ENCODE measurements at regions of chr7 and their contacts with region 1.

Region 1: DNA sequence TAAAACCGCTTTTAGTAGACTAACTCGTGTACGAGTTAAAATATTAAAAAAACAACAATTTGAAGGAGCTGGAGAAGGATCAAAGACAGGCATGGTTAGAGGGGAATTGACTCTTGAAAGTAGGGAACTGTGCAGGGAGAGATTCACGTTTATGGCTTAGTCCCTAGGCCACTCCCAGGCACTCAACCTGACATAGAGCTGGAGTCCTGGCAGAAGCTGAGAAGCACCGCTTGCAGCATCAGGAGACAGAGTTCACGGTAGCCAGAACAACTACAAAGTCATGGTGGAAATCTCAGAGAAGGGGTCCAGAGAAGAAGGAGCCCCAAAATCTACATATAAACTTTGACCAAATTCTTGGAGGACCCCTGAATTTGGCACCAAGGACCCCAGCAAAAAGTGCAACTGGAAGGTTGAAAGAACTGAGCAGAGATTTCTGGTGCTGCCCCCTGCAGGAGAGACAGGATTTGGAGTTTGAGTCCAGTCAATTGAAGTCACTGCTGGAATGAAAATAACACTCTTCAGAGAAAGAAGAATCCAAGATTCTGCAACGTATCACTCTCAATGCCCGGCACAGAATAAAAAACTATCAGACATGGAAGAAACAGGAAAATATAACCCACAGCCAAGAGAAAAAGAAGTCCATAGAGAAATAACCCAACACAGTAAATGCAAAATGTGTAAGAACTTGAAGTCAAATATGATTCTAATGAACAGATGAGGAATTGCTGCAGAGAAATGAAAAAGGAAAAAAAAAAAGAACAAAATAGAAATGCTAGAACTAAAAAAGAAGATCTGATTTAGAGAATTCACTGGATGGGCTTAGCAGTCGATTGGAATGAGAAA is 493.3 kb upstream of the PODXL start:
- DNase-seq: peak in 1 of 10 donors; percentile 26

Region 2: DNA sequence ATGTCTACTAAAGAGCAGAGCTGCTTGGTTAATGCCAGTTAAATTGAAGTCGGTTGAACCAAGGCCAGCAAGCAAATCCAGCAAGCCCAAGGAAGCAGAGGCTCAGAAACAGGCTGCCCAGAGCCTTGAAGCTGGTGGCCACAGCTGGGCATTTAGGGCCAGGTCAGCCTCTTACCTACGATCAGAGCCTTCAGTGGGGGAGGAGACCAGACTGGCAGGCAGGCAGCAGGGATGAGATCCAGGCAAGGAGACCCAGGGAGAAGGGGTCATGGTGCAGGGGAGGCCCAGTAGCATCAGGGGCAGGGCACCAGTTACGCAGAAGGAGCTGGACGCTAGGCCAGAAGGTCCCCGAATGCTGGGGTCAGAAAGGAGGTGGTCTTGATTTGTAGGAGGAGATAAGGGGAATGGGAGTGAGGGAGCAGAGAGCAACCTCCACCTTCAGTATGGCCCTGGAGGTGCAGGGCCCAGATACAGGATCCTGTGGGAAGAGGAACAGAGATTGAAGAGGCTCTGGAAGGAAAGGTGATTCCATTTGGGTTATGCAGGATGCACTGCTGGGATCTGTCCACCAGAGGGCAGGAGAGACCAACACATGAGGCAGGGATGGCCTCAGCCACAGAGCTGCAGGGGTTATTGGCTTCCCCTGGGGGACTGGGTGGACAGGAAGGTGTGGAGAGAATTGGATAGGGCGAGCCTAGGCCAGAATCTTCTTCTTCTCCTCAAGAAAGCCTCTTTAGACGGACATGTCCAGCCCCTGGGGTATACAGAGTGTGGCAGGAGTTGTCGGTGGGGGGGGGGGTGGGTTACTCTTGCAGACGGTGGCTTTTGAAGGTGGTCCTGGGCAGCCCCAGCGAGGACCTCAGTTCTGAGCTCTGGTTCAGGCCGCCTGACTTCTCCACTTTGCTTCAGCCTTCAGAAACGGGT is 360.7 kb before region 1 on chr7:
- intact Hi-C with region 1: loop called (anchors 10 kb)
- DNase-seq: peak; percentile 50 to 93 (median 76)